Prostate gland (tissue), 2 donors: ENCODE measurements at regions of chrX and their contacts with region 1.

Region 1: DNA sequence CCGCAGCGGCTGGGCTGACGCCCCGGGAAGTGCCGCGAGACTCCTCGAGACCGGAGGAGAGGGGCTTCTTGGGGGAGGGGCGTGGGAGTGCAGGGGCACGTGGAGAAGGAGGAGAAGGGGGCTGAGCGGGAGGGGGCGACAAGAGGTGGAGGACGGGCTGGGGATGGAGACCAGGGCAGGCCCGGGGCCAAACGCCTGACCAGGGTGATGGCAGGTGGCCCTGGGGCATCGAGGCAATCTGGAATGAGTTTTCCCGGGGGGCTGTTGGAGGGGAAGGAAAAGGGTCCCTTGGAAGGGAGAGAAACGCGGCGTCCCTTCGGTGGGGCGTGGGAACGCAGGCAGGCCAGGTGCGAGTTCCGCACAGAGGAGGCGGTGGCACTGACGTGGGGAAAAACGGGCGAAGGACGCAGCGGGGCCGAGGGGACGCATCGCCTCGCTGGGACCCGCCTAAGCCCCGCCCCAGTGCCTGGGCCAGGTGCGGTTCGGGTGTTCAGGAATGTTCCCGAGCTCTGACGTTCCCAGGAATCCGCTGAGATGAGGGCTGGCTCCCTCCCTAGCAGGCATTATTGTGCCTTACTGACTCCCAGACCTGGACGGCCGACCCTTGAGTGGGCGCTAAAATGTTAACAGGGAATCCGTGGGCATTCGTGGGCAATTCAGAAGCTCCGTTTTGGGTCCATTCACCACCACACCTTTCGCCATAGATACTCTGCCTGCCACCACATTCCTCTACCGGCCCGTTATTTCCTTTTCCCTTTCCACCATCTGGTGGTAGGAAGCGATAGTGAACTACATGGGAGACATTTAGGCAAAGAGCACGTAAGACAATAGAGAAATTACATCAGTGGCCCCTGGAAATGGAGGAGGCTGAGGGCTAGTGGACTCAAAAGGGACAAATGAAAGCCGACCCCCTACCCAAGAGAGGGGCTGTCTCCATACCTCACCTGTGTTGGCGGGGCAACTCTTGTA is 795 bp upstream of the SH3KBP1 start:
- DNase-seq: peak; percentile 24
- H3K4me3 ChIP-seq: peak overlapping the region; percentile 49 to 55
- H3K27ac ChIP-seq: peak overlapping the region; percentile 65 to 75
- H3K4me1 ChIP-seq: no peaks in the 10 kb centered on the region
- H3K27me3 ChIP-seq: no peaks in the 10 kb centered on the region
- CTCF ChIP-seq: peak in 3 of 4 experiments; percentile 40 to 67 (median 60)
- POLR2A ChIP-seq: no peak

Region 2: DNA sequence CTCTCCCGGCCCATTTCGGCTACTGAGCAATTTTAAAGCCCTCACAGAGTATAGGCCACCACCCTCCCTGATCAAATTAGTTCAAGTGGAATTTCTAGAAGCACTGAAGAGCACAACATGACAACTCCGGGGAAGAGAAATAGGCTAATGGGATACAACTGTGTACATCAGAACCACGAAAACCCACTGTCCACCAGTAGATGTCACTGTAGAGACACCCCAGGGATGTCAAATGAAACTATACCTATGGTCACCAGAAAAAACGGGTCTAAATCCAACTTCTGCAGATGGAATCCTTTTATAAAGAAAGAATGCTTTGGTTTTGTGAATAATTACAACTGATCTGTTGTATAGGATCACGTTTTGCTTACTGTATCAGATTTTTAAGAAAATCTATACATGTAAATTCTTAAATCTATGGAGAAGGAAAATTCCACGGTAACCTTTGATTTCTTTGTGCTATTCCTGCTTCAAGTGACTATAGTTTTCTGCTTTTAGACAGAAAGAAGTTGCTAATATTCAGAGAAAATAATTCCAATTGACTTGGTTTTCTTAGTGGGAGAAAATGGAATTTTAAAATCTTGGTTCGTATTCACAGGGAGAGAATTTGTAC is 343.4 kb before region 1 on chrX:
- intact Hi-C with region 1: loop called (anchors 2 kb)
- DNase-seq: peak; percentile 39
- H3K4me3 ChIP-seq: no peak overlapping the region
- H3K27ac ChIP-seq: no peak overlapping the region
- H3K4me1 ChIP-seq: no peaks in the 10 kb centered on the region
- H3K27me3 ChIP-seq: no peaks in the 10 kb centered on the region
- CTCF ChIP-seq: peak in 3 of 4 experiments; percentile 27 to 51 (median 51)
- POLR2A ChIP-seq: no peak

Region 3: GRCh38 chrX:19593690-19594089 is 294.5 kb before region 1 on chrX:
- intact Hi-C with region 1: loop called (anchors 2 kb)
- DNase-seq: no peak
- H3K4me3 ChIP-seq: no peak overlapping the region
- H3K27ac ChIP-seq: no peak overlapping the region
- H3K4me1 ChIP-seq: no peaks in the 10 kb centered on the region
- H3K27me3 ChIP-seq: no peaks in the 10 kb centered on the region
- CTCF ChIP-seq: peak in 2 of 4 experiments; percentile 37 to 47
- POLR2A ChIP-seq: no peak

Region 4: DNA sequence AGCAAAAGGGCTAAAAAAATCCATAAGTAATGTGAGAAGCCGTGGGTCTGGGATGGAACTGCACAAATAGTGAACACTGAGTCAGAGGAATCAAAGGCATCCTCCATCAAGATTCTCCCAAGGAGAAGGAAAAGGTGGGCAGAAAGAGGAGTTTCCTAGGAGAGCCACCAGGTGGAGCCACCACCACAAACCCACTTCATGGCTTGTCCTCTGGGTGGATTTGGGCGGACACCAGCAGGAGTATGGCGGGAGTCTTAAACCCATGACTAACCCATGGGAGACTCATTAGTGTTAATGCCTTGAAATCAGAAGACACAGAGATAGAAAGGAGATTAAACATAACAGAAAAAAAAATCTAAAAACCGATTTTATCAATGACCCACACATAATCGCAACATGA is 148.5 kb before region 1 on chrX:
- intact Hi-C with region 1: loop called (anchors 5 kb)
- DNase-seq: peak; percentile 4
- H3K4me3 ChIP-seq: no peak overlapping the region
- H3K27ac ChIP-seq: no peak overlapping the region
- H3K4me1 ChIP-seq: no peaks in the 10 kb centered on the region
- H3K27me3 ChIP-seq: no peaks in the 10 kb centered on the region
- CTCF ChIP-seq: peak in 3 of 4 experiments; percentile 28 to 50 (median 44)
- POLR2A ChIP-seq: no peak